Ovary (tissue), 10 donors: ENCODE measurements at regions of chr9 and their contacts with region 1.

Region 1: DNA sequence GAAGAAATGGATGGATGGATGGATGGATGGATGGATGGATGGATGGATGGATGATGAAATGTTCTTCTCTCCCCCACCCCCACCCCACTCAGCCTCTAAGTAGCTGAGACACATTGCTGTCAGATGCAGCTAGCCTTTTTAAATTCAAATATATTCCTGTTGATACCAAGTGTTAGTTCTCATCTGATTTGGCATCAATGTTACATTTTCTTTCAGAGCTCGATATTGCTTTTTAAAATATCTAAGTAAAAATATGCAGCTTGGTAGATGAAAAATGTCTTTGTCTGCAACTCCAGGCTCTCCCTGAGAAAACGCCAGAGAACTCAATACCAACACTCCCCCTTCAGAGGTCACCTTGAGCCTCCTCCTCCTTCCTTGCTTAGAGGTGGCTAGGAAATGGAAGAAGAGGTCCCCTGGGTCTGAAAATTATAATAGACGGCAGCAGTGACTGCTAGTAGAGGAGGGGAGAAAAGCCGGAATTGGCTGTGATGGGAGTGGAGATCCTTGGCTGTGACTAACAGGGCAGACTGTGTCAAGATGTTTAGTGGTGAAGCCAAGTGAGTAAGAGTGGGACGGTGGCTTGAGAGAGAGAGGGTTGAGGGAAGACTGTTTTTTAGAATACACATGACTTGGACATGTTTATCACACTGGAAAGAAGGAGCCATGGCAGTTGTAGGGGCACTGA is 156.0 kb downstream of the ZNF462 start:
- DNase-seq: no peak
- H3K4me3 ChIP-seq: no peak overlapping the region
- H3K27ac ChIP-seq: no peak overlapping the region
- H3K4me1 ChIP-seq: no peaks in the 10 kb centered on the region
- H3K27me3 ChIP-seq: no peaks in the 10 kb centered on the region
- CTCF ChIP-seq: no peak
- EP300 ChIP-seq: no peak
- POLR2A ChIP-seq: no peak

Region 2: DNA sequence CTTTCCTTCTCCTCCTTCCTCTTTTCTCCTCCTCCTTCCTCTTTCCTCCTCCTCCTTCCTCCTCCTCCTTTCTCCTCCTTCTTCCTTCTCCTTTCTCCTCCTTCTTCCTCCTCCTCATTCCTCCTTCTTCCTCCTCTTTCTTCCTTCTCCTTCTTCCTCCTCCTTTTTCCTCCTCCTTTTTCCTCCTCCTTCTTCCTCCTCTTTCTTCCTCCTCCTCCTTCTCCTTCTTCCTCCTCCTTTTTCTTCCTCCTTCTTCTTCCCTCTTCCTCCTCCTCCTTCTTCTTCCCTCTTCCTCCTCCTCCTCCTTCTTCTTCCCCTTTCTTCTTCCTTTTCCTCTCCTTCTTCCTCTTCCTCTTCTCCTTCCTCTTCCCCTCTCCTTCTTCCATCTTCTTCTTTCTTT is 785.9 kb before region 1 on chr9:
- intact Hi-C with region 1: no loop called
- DNase-seq: no peak
- H3K4me3 ChIP-seq: no peak overlapping the region
- H3K27ac ChIP-seq: no peak overlapping the region
- H3K4me1 ChIP-seq: no peaks in the 10 kb centered on the region
- H3K27me3 ChIP-seq: no peaks in the 10 kb centered on the region
- CTCF ChIP-seq: no peak
- EP300 ChIP-seq: no peak
- POLR2A ChIP-seq: no peak

Region 3: GRCh38 chr9:106994463-106994862 is 24.5 kb before region 1 on chr9:
- intact Hi-C with region 1: loop called in 1 of 4 experiments (anchors 2 kb)
- DNase-seq: no peak
- H3K4me3 ChIP-seq: no peak overlapping the region
- H3K27ac ChIP-seq: no peak overlapping the region
- H3K4me1 ChIP-seq: no peaks in the 10 kb centered on the region
- H3K27me3 ChIP-seq: no peaks in the 10 kb centered on the region
- CTCF ChIP-seq: no peak
- EP300 ChIP-seq: no peak
- POLR2A ChIP-seq: no peak